AG04450 (cell line): ENCODE measurements at regions of chr3 and their contacts with region 1.

Region 1: DNA sequence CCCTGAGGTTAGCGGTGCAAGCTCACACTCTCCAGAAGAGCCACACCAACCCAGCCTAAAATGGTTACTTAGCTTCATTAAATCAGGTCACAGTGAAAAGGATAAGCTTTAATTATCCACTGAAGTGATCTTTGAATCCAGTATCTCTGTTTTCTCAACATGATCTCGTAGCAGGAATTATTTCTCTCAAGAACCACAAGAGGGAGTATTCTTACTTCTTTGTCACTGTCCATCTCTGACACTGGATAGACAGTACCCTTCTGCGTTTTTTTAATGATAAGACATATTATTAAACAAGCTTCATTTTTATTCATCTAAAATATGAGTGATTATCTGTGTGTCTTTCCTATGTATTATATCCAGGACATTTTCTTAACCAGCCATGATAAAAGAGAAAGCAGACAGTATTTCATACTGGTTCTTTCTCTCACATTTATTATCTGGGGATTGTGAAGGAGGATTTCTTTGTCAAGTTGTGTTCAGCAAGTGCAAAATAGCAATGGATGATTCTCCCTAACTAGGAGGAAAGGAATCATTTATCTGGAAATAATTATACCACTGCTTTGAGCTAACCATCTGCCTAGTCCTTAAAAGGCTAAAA is 105.4 kb upstream of the CCDC54 start:
- DNase-seq: no peak
- H3K4me3 ChIP-seq: no peak overlapping the region
- H3K27ac ChIP-seq: no peak overlapping the region
- H3K27me3 ChIP-seq: no peaks in the 10 kb centered on the region
- CTCF ChIP-seq: peak; percentile 68

Region 2: GRCh38 chr3:107189158-107189791 is 82.6 kb before region 1 on chr3:
- CTCF ChIA-PET with region 1: no interaction called
- POLR2A ChIA-PET with region 1: no interaction called
- DNase-seq: no peak
- H3K4me3 ChIP-seq: no peak overlapping the region
- H3K27ac ChIP-seq: no peak overlapping the region
- H3K27me3 ChIP-seq: no peaks in the 10 kb centered on the region
- CTCF ChIP-seq: no peak

Region 3: DNA sequence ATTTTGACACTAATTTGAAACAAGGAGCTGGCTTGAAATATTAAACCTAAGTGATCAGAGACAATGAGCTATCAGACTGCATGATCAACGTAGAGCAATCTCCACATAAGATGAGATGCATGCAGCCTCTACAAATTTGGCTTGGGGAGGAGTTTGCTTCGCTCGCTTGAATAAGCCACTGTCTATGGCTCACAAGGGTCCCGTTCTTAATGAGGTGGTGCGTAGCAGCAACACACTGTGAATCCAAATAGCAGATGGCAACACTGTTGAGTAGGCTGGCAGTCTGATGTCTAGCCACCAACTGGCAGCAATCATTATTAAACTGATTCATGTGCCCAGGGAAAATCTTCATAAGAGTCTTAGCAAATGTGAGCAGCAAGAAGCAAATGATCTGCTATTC is 20.1 kb before region 1 on chr3:
- CTCF ChIA-PET with region 1: interaction called, 23 read pairs
- POLR2A ChIA-PET with region 1: no interaction called
- DNase-seq: no peak
- H3K4me3 ChIP-seq: no peak overlapping the region
- H3K27ac ChIP-seq: no peak overlapping the region
- H3K27me3 ChIP-seq: no peaks in the 10 kb centered on the region
- CTCF ChIP-seq: no peak

Region 4: DNA sequence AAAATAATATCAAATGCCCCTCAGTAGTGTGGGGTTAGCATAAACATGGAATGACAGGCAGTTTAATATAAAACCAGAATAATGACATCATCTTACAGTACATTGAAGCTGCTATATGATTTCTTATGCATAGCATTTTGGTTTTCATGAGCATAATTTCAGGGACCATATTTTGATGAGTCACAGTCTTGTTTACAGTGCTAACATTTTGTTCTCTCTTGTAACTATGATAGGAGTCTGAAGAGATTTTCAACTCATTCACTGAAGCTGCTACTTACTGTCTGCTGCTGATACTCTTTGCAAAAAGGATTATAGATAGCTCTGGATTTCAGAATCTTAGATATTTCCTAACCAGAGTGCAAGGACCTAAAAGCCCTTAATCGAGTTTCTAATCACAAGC is 12.7 kb after region 1 on chr3:
- CTCF ChIA-PET with region 1: interaction called, 45 read pairs
- POLR2A ChIA-PET with region 1: no interaction called
- DNase-seq: no peak
- H3K4me3 ChIP-seq: no peak overlapping the region
- H3K27ac ChIP-seq: no peak overlapping the region
- H3K27me3 ChIP-seq: no peaks in the 10 kb centered on the region
- CTCF ChIP-seq: no peak

Region 5: GRCh38 chr3:107414325-107414964 is 142.6 kb after region 1 on chr3:
- CTCF ChIA-PET with region 1: interaction called, 166 read pairs
- POLR2A ChIA-PET with region 1: no interaction called
- DNase-seq: no peak
- H3K4me3 ChIP-seq: no peak overlapping the region
- H3K27ac ChIP-seq: no peak overlapping the region
- H3K27me3 ChIP-seq: no peaks in the 10 kb centered on the region
- CTCF ChIP-seq: no peak

Region 6: DNA sequence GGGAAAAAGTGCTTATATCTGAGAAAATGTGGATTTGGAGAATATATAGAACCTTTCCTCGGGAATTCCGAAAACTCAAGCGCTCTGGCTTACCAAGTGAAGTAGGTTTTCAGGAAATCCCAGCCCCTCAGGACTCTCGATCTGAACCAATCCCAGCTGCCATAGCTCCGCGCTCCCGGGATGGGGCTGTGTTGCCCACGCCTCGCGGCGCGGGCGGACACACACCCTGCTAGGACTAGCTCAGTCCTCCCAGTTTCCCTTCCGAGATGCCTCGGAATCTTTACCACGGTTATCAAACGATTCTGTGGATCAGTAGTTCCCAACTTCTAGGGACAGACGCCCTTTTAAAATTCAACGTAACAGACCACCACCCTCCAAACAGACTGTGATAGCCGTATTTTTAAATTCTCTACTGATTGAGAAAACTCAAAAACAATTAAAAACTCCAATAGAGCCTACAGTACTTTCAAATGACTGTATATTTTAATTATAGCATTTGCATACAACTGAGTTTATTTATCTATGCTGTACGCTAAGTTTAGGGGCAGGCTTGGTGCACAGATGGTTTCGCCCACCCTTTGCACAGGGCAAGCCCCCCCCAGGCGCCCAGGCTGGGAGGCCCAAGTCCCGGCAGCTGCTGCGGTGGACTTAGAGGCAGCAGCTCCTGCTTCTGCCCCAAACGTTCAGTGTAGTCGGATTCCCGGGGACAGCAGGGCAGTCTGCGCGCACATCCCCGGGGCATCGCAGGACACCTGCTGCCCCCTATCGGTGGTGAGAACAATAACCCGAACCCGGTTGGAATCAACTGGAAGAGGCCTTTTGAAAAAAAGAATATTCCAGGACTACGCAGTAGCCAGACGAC is 157.7 kb after region 1 on chr3:
- CTCF ChIA-PET with region 1: interaction called, 137 read pairs
- POLR2A ChIA-PET with region 1: no interaction called
- DNase-seq: peak; percentile 70
- H3K4me3 ChIP-seq: peak overlapping the region; percentile 61
- H3K27ac ChIP-seq: no peak overlapping the region
- H3K27me3 ChIP-seq: no peaks in the 10 kb centered on the region
- CTCF ChIP-seq: peak; percentile 91

Region 7: DNA sequence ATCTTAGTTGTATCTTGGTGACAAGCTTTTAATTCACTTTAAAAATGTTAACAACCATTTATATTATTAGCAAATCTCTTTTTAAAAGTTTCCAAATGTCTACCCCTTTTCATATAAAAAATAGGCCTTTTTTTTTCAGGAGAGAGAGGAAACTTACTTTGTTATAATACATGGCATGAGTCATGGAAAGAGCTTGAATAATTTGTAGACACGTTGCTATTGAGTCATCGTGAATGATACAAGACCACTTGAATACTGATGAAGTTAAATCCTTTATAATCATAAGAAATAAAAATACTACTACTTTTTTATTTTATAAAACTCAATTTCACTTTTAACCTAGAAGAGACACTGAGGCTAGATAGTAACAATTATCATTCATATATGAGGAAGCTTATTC is 180.5 kb after region 1 on chr3:
- CTCF ChIA-PET with region 1: interaction called, 17 read pairs
- POLR2A ChIA-PET with region 1: no interaction called
- DNase-seq: no peak
- H3K4me3 ChIP-seq: no peak overlapping the region
- H3K27ac ChIP-seq: no peak overlapping the region
- H3K27me3 ChIP-seq: no peaks in the 10 kb centered on the region
- CTCF ChIP-seq: no peak

Region 8: GRCh38 chr3:107660306-107660976 is 388.6 kb after region 1 on chr3:
- CTCF ChIA-PET with region 1: interaction called, 10 read pairs
- POLR2A ChIA-PET with region 1: no interaction called
- DNase-seq: no peak
- H3K4me3 ChIP-seq: no peak overlapping the region
- H3K27ac ChIP-seq: no peak overlapping the region
- H3K27me3 ChIP-seq: no peaks in the 10 kb centered on the region
- CTCF ChIP-seq: peak; percentile 66

Region 9: DNA sequence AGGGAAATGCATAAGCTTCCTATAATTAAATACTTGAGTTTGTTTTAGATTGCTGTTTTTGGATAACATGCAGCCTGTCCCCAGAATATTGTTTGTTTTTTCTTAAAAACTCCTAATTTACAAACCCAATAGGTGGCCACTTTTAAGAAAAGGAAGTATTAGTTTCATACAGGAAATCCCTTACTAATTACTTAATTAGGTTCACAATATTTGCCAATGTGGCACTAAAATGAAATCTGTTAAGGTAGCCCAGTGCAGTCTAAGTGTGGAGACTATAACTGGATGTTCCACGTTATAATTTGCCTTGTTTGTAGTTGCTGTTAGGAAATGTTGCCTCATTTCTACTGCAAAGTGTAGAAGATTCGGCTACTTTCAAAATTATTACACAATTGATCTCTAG is 446.7 kb after region 1 on chr3:
- CTCF ChIA-PET with region 1: no interaction called
- POLR2A ChIA-PET with region 1: no interaction called
- DNase-seq: no peak
- H3K4me3 ChIP-seq: no peak overlapping the region
- H3K27ac ChIP-seq: no peak overlapping the region
- H3K27me3 ChIP-seq: no peaks in the 10 kb centered on the region
- CTCF ChIP-seq: no peak